Left ventricle myocardium superior (tissue), 1 donor: ENCODE measurements at regions of chr4 and their contacts with region 1.

Region 1: GRCh38 chr4:189147005-189147929 is 793.4 kb upstream of the FRG1 start:
- DNase-seq: no peak
- ATAC-seq: no peak

Region 2: GRCh38 chr4:188691811-188692210 is 455.5 kb before region 1 on chr4:
- intact Hi-C with region 1: no loop called
- DNase-seq: no peak
- ATAC-seq: no peak

Region 3: DNA sequence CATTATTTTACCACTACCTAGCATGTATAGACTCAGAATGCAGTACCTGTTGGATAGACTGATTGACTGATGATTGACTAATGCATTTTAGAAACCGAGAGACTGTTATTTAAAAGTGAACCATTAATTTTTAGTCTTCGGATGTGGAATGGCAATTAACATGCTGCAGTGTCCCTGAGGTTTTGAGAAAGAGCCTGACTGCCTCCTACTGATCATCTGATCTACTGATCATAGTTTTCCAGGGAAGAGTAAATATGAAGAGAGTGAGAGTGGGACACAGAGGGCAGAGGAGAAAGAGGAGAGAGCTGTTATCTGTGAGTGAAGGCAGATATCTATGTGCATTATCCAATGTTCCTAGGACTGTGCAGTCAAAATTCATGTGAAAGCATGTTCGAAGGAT is 243.3 kb before region 1 on chr4:
- intact Hi-C with region 1: no loop called
- DNase-seq: no peak
- ATAC-seq: no peak

Region 4: DNA sequence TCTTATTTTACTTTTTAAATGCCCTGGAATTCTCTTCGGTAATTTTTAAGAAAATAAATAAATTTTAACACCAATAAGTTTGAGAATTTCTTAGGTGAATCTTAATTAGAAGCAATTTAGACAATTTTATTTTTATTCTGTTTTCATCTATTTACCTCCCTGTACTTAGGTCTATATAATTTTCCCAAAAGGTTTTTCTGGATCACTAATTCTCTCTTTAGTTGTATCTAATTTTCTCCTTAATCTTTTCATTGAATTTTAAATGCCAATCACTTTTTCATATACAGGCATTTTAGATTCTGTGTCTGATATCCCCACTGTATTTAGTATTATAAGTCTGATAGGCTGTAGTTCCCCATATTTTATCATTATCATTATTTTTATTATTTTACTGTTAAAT is 162.7 kb before region 1 on chr4:
- intact Hi-C with region 1: loop called (anchors 5 kb)
- DNase-seq: no peak
- ATAC-seq: no peak